ENCODE measurements at regions of chr12 and their contacts with region 1.

Region 1: GRCh38 chr12:94101738-94102660 is 46.4 kb upstream of the PLXNC1 start:
- DNase-seq: peak; percentile 93
- H3K4me3 Mint-ChIP-seq: peak overlapping the region; percentile 78
- H3K27ac Mint-ChIP-seq: peak overlapping the region; percentile 7
- H3K4me1 Mint-ChIP-seq: peaks cover 16% of the 10 kb centered on the region
- H3K27me3 Mint-ChIP-seq: no peaks in the 10 kb centered on the region

Region 2: DNA sequence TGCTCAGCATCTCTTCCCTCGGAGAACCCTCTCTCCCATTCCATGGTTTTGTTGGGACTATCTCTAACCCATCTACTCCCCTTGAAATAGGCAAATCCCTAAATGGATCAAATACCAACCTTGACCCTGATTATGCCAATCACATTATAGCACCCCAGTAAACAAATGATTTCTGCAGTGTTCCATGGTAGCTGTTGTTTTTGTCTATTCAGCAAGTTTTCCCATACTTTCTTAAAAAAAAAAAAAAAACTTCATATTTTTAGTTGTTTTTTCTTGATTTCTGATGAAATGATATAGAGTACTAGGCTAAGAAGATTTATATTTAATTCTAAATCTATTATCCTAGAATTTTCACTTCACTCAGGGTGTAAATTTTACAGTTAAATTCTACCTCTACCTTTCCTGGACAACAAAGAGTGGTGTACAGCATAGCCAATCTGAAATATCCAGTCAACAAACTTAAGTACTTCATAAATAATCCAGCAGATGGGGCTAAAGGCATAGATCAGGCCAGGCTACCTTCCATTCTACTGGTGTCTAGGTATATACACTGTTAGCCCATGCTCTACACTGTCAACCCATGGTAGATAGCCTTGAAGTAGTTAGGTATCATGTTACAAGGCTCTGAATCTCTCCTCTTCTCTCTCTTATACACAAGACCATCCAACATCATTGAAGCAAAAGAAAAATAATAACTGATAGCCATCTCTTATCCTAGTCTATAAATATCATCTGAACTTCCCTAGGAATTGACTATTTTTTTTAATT is 1317.0 kb before region 1 on chr12:
- CTCF ChIA-PET with region 1: no interaction called
- intact Hi-C with region 1: loop called (anchors 2 kb)
- DNase-seq: peak; percentile 35
- H3K4me3 Mint-ChIP-seq: no peak overlapping the region
- H3K27ac Mint-ChIP-seq: no peak overlapping the region
- H3K4me1 Mint-ChIP-seq: peaks cover 2% of the 10 kb centered on the region
- H3K27me3 Mint-ChIP-seq: no peaks in the 10 kb centered on the region

Region 3: GRCh38 chr12:93397412-93397811 is 704.6 kb before region 1 on chr12:
- CTCF ChIA-PET with region 1: interaction called, 3 read pairs
- intact Hi-C with region 1: loop called (anchors 5 kb)
- DNase-seq: no peak
- H3K4me3 Mint-ChIP-seq: no peak overlapping the region
- H3K27ac Mint-ChIP-seq: no peak overlapping the region
- H3K4me1 Mint-ChIP-seq: peaks cover 3% of the 10 kb centered on the region
- H3K27me3 Mint-ChIP-seq: no peaks in the 10 kb centered on the region

Region 4: GRCh38 chr12:93526786-93527428 is 575.1 kb before region 1 on chr12:
- CTCF ChIA-PET with region 1: interaction called, 27 read pairs
- intact Hi-C with region 1: loop called (anchors 1 kb)
- DNase-seq: no peak
- H3K4me3 Mint-ChIP-seq: no peak overlapping the region
- H3K27ac Mint-ChIP-seq: no peak overlapping the region
- H3K4me1 Mint-ChIP-seq: peaks cover 15% of the 10 kb centered on the region
- H3K27me3 Mint-ChIP-seq: peaks cover 2% of the 10 kb centered on the region

Region 5: GRCh38 chr12:93766796-93767523 is 335.0 kb before region 1 on chr12:
- CTCF ChIA-PET with region 1: interaction called, 141 read pairs
- intact Hi-C with region 1: loop called (anchors 1 kb)
- DNase-seq: peak; percentile 71
- H3K4me3 Mint-ChIP-seq: no peak overlapping the region
- H3K27ac Mint-ChIP-seq: no peak overlapping the region
- H3K4me1 Mint-ChIP-seq: peaks cover 17% of the 10 kb centered on the region
- H3K27me3 Mint-ChIP-seq: no peaks in the 10 kb centered on the region

Region 6: GRCh38 chr12:94033101-94033500 is 68.9 kb before region 1 on chr12:
- CTCF ChIA-PET with region 1: interaction called, 11 read pairs
- intact Hi-C with region 1: loop called (anchors 5 kb)
- DNase-seq: peak; percentile 22
- H3K4me3 Mint-ChIP-seq: no peak overlapping the region
- H3K27ac Mint-ChIP-seq: peak overlapping the region; percentile 50
- H3K4me1 Mint-ChIP-seq: peaks cover 40% of the 10 kb centered on the region
- H3K27me3 Mint-ChIP-seq: no peaks in the 10 kb centered on the region

Region 7: GRCh38 chr12:94126067-94126466 is 24.1 kb after region 1 on chr12:
- CTCF ChIA-PET with region 1: interaction called, 36 read pairs
- intact Hi-C with region 1: no loop called
- DNase-seq: no peak
- H3K4me3 Mint-ChIP-seq: no peak overlapping the region
- H3K27ac Mint-ChIP-seq: no peak overlapping the region
- H3K4me1 Mint-ChIP-seq: peaks cover 47% of the 10 kb centered on the region
- H3K27me3 Mint-ChIP-seq: no peaks in the 10 kb centered on the region